ENCODE measurements at regions of chr6 and their contacts with region 1.

Region 1: GRCh38 chr6:41027799-41028628 is 11.0 kb downstream of the UNC5CL start:
- DNase-seq: no peak
- H3K4me3 ChIP-seq: peak overlapping the region; percentile 30
- H3K27me3 ChIP-seq: peaks cover 2% of the 10 kb centered on the region; the same call in 1 of the 2 replicates
- CTCF ChIP-seq: peak; percentile 87

Region 2: DNA sequence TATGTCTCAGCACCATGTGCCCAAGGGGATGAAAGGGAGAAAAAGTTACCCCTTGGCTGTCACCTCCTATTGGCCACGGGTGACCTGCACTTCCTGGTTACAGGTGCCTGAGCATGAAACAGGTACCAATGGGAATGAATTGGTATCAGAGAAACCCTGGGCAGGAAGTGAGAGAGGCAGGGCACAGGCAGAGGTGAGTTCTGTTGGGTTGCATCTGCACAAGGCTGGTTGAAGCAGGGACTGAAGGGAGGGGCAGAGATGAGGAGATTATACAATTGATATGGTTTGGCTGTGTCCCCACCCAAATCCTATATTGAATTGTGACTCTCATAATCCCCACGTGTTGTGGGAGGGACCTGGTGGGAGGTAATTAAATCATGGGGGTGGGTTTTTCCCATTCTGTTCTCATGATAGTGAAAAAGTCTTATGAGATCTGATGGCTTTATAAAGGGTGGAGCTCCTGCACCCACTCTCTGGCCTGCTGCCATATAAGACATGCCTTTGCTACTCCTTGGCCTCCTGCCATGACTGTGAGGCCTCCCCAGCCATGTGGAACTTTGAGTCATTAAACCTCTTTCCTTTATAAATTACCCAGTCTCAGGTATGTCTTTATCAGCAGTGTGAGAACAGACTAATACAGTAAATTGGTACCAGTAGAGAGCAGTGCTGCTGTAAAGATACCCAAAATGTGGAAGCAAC is 732.6 kb before region 1 on chr6:
- CTCF ChIA-PET with region 1: no interaction called
- POLR2A ChIA-PET with region 1: no interaction called
- DNase-seq: no peak
- H3K4me3 ChIP-seq: no peak overlapping the region
- H3K27me3 ChIP-seq: no peaks in the 10 kb centered on the region
- CTCF ChIP-seq: no peak

Region 3: GRCh38 chr6:40550202-40551101 is 477.6 kb before region 1 on chr6:
- CTCF ChIA-PET with region 1: interaction called, 10 read pairs
- POLR2A ChIA-PET with region 1: no interaction called
- DNase-seq: no peak
- H3K4me3 ChIP-seq: no peak overlapping the region
- H3K27me3 ChIP-seq: no peaks in the 10 kb centered on the region
- CTCF ChIP-seq: peak; percentile 72

Region 4: DNA sequence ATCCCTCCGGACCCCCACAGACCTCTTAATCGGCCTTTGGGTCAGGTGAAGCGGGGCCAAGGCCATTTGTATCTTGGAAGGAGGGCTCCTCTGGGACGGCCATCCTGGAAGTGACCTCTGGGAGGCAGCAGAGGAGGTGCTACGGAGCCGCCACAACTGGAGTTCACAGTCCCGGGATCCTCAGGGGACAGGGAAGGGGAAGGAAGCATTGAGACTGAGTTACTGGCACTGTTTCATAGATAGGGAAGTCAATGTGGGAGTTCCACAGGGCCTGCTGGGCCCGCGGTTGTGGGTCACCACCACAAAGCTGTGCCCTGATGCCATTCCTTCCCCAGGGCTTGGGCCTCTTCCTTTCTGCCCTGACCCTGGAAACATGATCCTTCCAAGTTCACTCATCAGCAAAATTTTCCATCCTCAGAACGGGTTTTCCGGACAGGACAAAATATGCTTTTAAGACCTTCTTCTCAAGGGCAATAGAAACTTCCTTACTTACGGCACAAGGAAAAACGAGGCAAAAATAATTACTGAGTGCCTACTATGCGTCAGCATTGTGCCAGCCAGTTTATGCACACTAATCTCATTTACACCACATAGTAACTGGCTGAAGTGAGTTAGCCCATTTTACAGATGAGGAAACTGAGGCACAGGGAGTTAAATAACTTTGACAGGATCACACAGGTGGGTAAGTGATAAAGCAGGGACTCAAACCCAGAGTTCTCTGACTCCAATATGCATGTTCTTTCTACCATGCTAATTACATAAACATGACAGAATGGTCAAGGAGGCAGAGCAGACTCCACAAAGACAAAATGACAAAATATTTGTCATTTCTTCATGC is 132.8 kb before region 1 on chr6:
- CTCF ChIA-PET with region 1: interaction called, 184 read pairs
- POLR2A ChIA-PET with region 1: no interaction called
- DNase-seq: no peak
- H3K4me3 ChIP-seq: no peak overlapping the region
- H3K27me3 ChIP-seq: peaks cover 2% of the 10 kb centered on the region; the same call in 1 of the 2 replicates
- CTCF ChIP-seq: peak; percentile 77

Region 5: DNA sequence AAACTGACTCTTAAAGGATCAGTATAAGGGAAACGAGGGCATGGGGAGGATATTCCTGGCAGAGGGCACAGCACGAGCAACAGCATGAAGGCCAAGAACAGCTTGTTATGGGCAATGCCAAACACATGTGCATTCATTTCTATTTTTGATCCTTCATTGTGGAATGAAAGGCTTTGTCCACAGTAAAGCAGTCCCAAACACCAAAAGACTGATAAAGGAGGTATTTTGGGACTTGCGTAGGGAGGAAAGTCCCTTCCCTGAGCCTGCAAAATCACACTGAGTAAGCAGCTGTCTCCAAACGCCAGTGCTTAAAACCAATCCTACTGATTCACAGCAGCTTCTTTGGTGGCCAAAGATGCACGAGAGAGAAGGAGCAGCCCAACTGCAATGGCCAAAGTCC is 127.2 kb before region 1 on chr6:
- CTCF ChIA-PET with region 1: interaction called, 184 read pairs
- POLR2A ChIA-PET with region 1: no interaction called
- DNase-seq: no peak
- H3K4me3 ChIP-seq: no peak overlapping the region
- H3K27me3 ChIP-seq: no peaks in the 10 kb centered on the region
- CTCF ChIP-seq: no peak

Region 6: GRCh38 chr6:40997256-40997957 is 30.6 kb before region 1 on chr6:
- CTCF ChIA-PET with region 1: interaction called, 10 read pairs
- POLR2A ChIA-PET with region 1: no interaction called
- DNase-seq: peak; percentile 41
- H3K4me3 ChIP-seq: no peak overlapping the region
- H3K27me3 ChIP-seq: no peaks in the 10 kb centered on the region; the same call in 1 of the 2 replicates
- CTCF ChIP-seq: no peak

Region 7: GRCh38 chr6:41039060-41039998 is 11.3 kb after region 1 on chr6 and contains the start of gene UNC5CL:
- CTCF ChIA-PET with region 1: interaction called, 68 read pairs
- POLR2A ChIA-PET with region 1: no interaction called
- DNase-seq: no peak
- H3K4me3 ChIP-seq: no peak within 1 kb of the TSS
- H3K27me3 ChIP-seq: peaks cover 3% of the 10 kb centered on the region; the same call in 1 of the 2 replicates
- CTCF ChIP-seq: peak; percentile 74
- polyA plus RNA-seq, gene UNC5CL: not detected in 2 replicates

Region 8: GRCh38 chr6:41066867-41067304 is 38.9 kb after region 1 on chr6:
- CTCF ChIA-PET with region 1: interaction called, 23 read pairs
- POLR2A ChIA-PET with region 1: no interaction called
- DNase-seq: no peak
- H3K4me3 ChIP-seq: no peak overlapping the region
- H3K27me3 ChIP-seq: no peaks in the 10 kb centered on the region
- CTCF ChIP-seq: peak; percentile 81

Measured in BJ (cell line).